ENCODE measurements at regions of chr1 and their contacts with region 1.

Region 1: GRCh38 chr1:17207966-17208418 is 3.1 kb downstream of the PADI1 start:
- DNase-seq: peak; percentile 81 to 83
- H3K4me3 ChIP-seq: peak overlapping the region; percentile 65; the same call in 1 of the 2 replicates
- H3K27ac ChIP-seq: peak overlapping the region; percentile 95
- H3K4me1 ChIP-seq: peaks cover 87% of the 10 kb centered on the region
- H3K27me3 ChIP-seq: no peaks in the 10 kb centered on the region
- CTCF ChIP-seq: no peak

Region 2: DNA sequence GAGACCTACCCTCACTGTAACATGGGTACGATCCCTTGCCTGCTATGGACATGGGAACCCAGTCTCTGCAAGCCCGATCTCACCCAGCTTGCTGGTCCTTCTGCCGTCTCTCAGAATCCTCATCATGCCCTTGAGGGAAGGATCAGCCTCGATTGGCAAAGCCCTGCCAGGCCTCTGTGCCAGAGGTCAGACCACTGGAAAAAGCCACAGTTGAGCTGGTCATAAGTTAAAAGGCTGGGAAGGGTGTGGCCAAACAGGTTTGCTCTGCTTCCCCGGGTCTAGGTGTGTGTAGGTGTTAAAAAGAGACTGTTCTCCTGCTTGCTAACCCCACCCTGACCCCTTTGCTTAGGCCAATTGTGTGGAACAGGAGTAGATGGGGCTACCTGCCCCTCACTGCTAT is 21.4 kb after region 1 on chr1:
- CTCF ChIA-PET with region 1: no interaction called
- POLR2A ChIA-PET with region 1: interaction called, 11 read pairs
- intact Hi-C with region 1: no loop called
- DNase-seq: peak; percentile 75 to 87
- H3K4me3 ChIP-seq: no peak overlapping the region; the same call in 1 of the 2 replicates
- H3K27ac ChIP-seq: peak overlapping the region; percentile 100
- H3K4me1 ChIP-seq: peaks cover 89% of the 10 kb centered on the region
- H3K27me3 ChIP-seq: no peaks in the 10 kb centered on the region
- CTCF ChIP-seq: no peak

Region 3: GRCh38 chr1:17250601-17251000 is 42.6 kb after region 1 on chr1:
- CTCF ChIA-PET with region 1: no interaction called
- POLR2A ChIA-PET with region 1: no interaction called
- intact Hi-C with region 1: no loop called
- DNase-seq: peak; percentile 90 to 97
- H3K4me3 ChIP-seq: no peak overlapping the region
- H3K27ac ChIP-seq: peak overlapping the region; percentile 93
- H3K4me1 ChIP-seq: peaks cover 54% of the 10 kb centered on the region
- H3K27me3 ChIP-seq: no peaks in the 10 kb centered on the region
- CTCF ChIP-seq: no peak

Measured in PC-9 (cell line).